Ovary (tissue), 10 donors: ENCODE measurements at regions of chr2 and their contacts with region 1.

Region 1: GRCh38 chr2:219057709-219058540 is 2.8 kb downstream of the IHH start:
- DNase-seq: peak; percentile 57 to 82 (median 69)
- H3K4me3 ChIP-seq: no peak overlapping the region
- H3K27ac ChIP-seq: no peak overlapping the region
- H3K4me1 ChIP-seq: peaks cover 7% of the 10 kb centered on the region
- H3K27me3 ChIP-seq: peaks cover 3% of the 10 kb centered on the region
- CTCF ChIP-seq: peak; percentile 80 to 84 (median 84)
- EP300 ChIP-seq: no peak
- POLR2A ChIP-seq: no peak

Region 2: DNA sequence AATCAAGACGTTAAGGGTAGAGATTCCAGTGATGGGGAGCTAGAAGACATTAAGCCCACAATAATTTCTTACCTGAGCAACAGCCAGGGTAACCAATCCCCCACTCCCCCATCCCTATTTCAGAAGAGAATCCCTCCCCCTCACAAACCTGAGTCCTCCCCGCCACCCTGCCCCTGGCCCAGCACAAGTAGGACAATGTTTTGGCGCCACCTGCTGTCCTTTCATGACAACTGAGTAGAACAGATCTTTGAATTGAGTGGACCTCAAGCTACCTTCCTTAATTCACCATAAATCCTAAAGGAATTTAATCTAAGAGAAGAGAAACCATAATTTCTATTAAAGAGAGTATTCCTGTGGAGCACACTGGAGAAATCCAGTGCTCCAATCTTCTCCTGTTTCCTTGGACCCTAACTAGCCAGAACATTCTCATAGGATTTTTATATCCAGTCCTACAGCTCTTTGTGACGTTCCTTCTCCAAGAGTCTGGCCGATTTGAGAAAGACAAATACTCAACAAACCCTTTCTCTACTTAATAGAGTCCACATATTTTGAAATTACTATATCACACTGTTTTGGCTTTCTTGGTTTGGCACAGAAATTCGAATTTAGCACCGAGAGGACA is 61.6 kb after region 1 on chr2:
- intact Hi-C with region 1: loop called in 1 of 4 experiments (anchors 5 kb)
- DNase-seq: peak; percentile 30 to 47 (median 44)
- H3K4me3 ChIP-seq: no peak overlapping the region
- H3K27ac ChIP-seq: no peak overlapping the region
- H3K4me1 ChIP-seq: peaks cover 7% of the 10 kb centered on the region
- H3K27me3 ChIP-seq: no peaks in the 10 kb centered on the region
- CTCF ChIP-seq: peak in 1 of 3 donors; percentile 23
- EP300 ChIP-seq: no peak
- POLR2A ChIP-seq: no peak

Region 3: GRCh38 chr2:219142329-219142728 is 84.4 kb after region 1 on chr2:
- intact Hi-C with region 1: loop called in 1 of 4 experiments (anchors 10 kb)
- DNase-seq: no peak
- H3K4me3 ChIP-seq: no peak overlapping the region
- H3K27ac ChIP-seq: no peak overlapping the region
- H3K4me1 ChIP-seq: no peaks in the 10 kb centered on the region
- H3K27me3 ChIP-seq: no peaks in the 10 kb centered on the region
- CTCF ChIP-seq: no peak
- EP300 ChIP-seq: no peak
- POLR2A ChIP-seq: no peak

Region 4: DNA sequence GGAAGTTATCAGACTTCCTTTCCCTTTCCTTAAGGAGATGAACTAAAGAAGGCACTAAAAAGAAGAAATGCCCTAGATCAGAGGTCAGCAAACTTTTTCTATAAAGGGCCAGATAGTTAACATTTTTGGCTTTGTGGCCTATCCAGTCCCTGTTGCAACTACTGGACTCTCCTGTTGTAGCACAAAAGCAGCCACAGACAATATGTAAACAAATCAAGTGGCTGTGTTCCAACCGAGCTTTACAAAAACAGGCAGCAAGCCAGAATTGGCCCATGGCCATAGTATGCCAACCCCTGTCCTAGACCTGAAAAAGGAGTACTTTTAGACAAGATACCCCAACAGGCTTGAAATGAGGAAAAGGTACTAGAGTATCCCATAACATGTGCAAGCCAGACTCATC is 91.7 kb after region 1 on chr2:
- intact Hi-C with region 1: loop called in 2 of 4 experiments (anchors 5 to 10 kb)
- DNase-seq: no peak
- H3K4me3 ChIP-seq: no peak overlapping the region
- H3K27ac ChIP-seq: no peak overlapping the region
- H3K4me1 ChIP-seq: peaks cover 1% of the 10 kb centered on the region
- H3K27me3 ChIP-seq: no peaks in the 10 kb centered on the region
- CTCF ChIP-seq: no peak
- EP300 ChIP-seq: no peak
- POLR2A ChIP-seq: no peak

Region 5: GRCh38 chr2:219155054-219155644 is 97.2 kb after region 1 on chr2:
- intact Hi-C with region 1: loop called in 2 of 4 experiments (anchors 5 kb)
- DNase-seq: peak in 1 of 5 donors; percentile 42
- H3K4me3 ChIP-seq: no peak overlapping the region
- H3K27ac ChIP-seq: no peak overlapping the region
- H3K4me1 ChIP-seq: no peaks in the 10 kb centered on the region
- H3K27me3 ChIP-seq: no peaks in the 10 kb centered on the region
- CTCF ChIP-seq: peak; percentile 49 to 77 (median 56)
- EP300 ChIP-seq: no peak
- POLR2A ChIP-seq: no peak

Region 6: DNA sequence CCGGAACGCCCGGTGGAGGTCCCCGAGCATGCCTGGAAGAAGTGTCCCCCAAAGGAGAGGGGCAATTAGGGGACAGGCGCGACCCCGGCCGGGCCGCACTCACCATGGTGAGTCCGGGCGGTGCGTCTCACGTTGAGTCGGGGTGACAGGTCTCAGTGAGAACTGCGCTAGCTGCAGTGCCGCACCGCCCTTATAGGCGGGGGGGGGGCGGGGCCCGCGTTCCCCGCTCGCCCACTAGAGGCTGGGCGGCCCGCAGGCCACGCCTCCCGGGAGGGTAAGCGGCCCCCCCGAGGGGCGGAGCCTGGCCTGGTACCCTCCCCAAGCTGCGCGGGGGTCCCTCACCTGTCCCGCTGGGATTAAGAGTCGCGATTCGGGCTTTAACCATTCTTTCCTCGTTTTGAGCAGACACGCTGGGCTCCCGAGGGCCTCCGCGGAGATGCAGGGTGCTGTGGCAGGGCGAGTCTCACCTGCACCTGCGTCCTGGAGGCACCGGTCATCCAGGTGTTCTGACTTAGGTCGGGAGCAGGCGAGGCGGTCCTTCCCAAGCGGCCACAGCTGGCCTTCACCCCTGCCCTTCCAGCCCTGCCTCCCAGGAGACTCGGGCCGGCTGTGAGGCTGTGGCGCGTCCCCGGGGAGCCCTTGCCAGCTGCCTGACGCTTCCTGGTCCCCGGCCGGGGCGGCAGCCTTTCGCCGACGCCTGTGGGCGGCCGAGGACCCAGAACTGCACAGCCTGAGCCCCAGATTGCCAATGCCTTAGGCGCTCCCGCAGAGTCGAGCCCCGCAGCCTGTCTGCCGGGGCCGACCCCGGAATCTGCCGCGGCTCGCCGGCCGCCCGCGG is 196.0 kb after region 1 on chr2 and contains the start of gene TUBA4A:
- intact Hi-C with region 1: no loop called
- DNase-seq: peak; percentile 76 to 89 (median 82)
- H3K4me3 ChIP-seq: peak within 1 kb of the TSS; percentile 57
- H3K27ac ChIP-seq: peak within 1 kb of the TSS; percentile 24 to 46
- H3K4me1 ChIP-seq: peaks cover 23% of the 10 kb centered on the region
- H3K27me3 ChIP-seq: no peaks in the 10 kb centered on the region
- CTCF ChIP-seq: peak in 2 of 3 donors; percentile 31
- EP300 ChIP-seq: no peak
- POLR2A ChIP-seq: peak; percentile 89
- total RNA-seq, gene TUBA4A: 8.4 to 53.6 (median 16.5) TPM